ENCODE measurements at regions of chr5 and their contacts with region 1.

Region 1: GRCh38 chr5:175478384-175479124 is at the start of gene SFXN1:
- DNase-seq: peak; percentile 82
- H3K4me3 Mint-ChIP-seq: peak within 1 kb of the TSS; percentile 95
- H3K27ac Mint-ChIP-seq: peak within 1 kb of the TSS; percentile 92
- H3K4me1 Mint-ChIP-seq: peaks cover 52% of the 10 kb centered on the region
- H3K27me3 Mint-ChIP-seq: peaks cover 8% of the 10 kb centered on the region
- total RNA-seq, gene SFXN1: 318 and 326 TPM in 2 replicates

Region 2: DNA sequence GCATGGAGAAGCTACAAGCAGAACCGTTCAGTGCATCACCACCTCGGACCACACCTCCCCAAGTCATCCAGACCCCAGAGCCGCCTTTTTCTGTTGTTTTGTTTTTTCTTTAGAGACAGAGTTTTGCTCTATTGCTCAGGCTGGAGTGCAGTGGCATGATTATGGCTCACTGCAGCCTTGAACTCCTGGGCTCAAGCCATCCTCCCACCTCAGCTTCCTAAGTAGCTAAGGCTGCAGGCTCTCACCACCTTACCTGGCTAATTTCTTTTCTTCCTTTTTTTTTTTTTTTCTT is 13.7 kb before region 1 on chr5:
- intact Hi-C with region 1: loop called (anchors 1 kb)
- DNase-seq: no peak
- H3K4me3 Mint-ChIP-seq: no peak overlapping the region
- H3K27ac Mint-ChIP-seq: no peak overlapping the region
- H3K4me1 Mint-ChIP-seq: peaks cover 15% of the 10 kb centered on the region
- H3K27me3 Mint-ChIP-seq: peaks cover 5% of the 10 kb centered on the region

Region 3: DNA sequence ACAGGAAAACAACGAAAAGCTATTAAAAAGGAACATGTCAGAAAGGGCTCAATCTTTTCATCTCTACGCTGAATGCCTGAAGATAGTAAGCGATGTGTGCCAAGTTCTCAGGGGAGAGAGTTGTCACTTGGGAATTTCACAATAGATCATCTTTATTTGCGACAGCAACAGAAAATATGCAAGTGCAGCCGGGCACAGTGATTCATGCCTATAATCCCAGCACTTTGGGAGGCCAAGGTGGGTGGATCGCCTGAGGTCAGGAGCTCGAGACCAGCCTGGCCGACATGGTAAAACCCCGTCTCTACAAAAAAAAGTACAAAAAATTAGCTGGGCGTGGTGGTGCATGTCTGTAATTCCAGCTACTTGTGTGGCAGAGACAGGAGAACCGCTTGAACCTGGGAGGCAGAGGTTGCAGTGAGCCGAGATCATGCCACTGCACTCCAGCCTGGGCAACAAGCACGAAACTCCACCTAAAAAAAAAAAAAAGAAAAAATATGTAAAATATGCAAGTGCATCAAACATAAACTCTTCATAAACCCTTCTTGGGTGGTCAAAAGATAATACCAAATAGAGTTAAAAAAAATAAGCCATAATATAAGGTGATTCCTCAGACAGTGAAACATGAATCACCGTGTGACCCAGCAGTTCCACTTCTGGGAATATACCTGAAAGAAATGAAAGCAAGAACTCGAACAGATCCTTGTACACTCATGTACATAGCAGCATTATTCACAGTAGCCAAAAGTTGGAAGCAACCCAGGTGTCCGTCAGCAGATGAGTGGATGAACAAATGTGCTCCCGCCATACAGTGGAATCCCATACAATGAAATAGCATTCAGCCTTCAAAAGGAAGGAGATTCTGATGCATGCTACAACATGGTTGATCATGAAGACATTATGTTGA is 16.0 kb after region 1 on chr5:
- intact Hi-C with region 1: loop called (anchors 2 kb)
- DNase-seq: no peak
- H3K4me3 Mint-ChIP-seq: no peak overlapping the region
- H3K27ac Mint-ChIP-seq: peak overlapping the region; percentile 70
- H3K4me1 Mint-ChIP-seq: peaks cover 43% of the 10 kb centered on the region
- H3K27me3 Mint-ChIP-seq: no peaks in the 10 kb centered on the region

Measured in activated T-helper 2 cell treated with anti-CD3 and anti-CD28 coated beads, Interferon-gamma antibody, Interleukin-2, Interleukin-4, amounts not matched to agents 10 μg/mL and 5 μg/mL and 100 μg/mL, durations not matched to agents 14 hours and 24 hours and 36 hours (primary cell).